ENCODE measurements at regions of chr11 and their contacts with region 1.

Region 1: GRCh38 chr11:47176328-47177228 is at the start of gene ARFGAP2:
- DNase-seq: peak; percentile 92 to 98 (median 96)
- ATAC-seq: peak; percentile 94
- H3K4me3 ChIP-seq: peak within 1 kb of the TSS; percentile 97
- H3K4me3 Mint-ChIP-seq: peak within 1 kb of the TSS; percentile 92 to 99 (median 98)
- H3K27ac ChIP-seq: peak within 1 kb of the TSS; percentile 97
- H3K27ac Mint-ChIP-seq: peak within 1 kb of the TSS; percentile 97 to 100 (median 99)
- H3K4me1 ChIP-seq: peaks cover 19 to 31% of the 10 kb centered on the region in 2 donors
- H3K4me1 Mint-ChIP-seq: peaks cover 19 to 60% (median 45%) of the 10 kb centered on the region in 7 donors
- H3K27me3 ChIP-seq: no peaks in the 10 kb centered on the region
- H3K27me3 Mint-ChIP-seq: no peaks in the 10 kb centered on the region
- total RNA-seq, gene ARFGAP2: 107 to 220 (median 155) TPM

Region 2: GRCh38 chr11:46593550-46594373 is 582.8 kb before region 1 on chr11 and contains the start of gene AMBRA1:
- CTCF ChIA-PET with region 1: no interaction called
- POLR2A ChIA-PET with region 1: no interaction called
- intact Hi-C with region 1: loop called in 1 of 2 experiments (anchors 1 kb)
- DNase-seq: peak; percentile 59 to 83 (median 80)
- ATAC-seq: peak; percentile 97
- H3K4me3 ChIP-seq: peak within 1 kb of the TSS; percentile 69
- H3K4me3 Mint-ChIP-seq: peak within 1 kb of the TSS; percentile 90 to 100 (median 97)
- H3K27ac ChIP-seq: peak within 1 kb of the TSS; percentile 84
- H3K27ac Mint-ChIP-seq: peak within 1 kb of the TSS; percentile 92 to 98 (median 96)
- H3K4me1 ChIP-seq: peaks cover 19 to 22% of the 10 kb centered on the region in 2 donors
- H3K4me1 Mint-ChIP-seq: peaks cover 23 to 49% (median 41%) of the 10 kb centered on the region in 7 donors
- H3K27me3 ChIP-seq: no peaks in the 10 kb centered on the region
- H3K27me3 Mint-ChIP-seq: no peaks in the 10 kb centered on the region
- total RNA-seq, gene AMBRA1: 38.1 to 48.7 (median 44.6) TPM

Region 3: GRCh38 chr11:46936138-46937110 is 240.2 kb before region 1 on chr11 and contains the start of gene CSTPP1:
- CTCF ChIA-PET with region 1: no interaction called
- POLR2A ChIA-PET with region 1: no interaction called
- intact Hi-C with region 1: loop called in 1 of 2 experiments (anchors 1 kb)
- DNase-seq: peak; percentile 80 to 92 (median 89)
- ATAC-seq: peak; percentile 99
- H3K4me3 ChIP-seq: peak within 1 kb of the TSS; percentile 76
- H3K4me3 Mint-ChIP-seq: peak within 1 kb of the TSS; percentile 86 to 100 (median 92)
- H3K27ac ChIP-seq: peak within 1 kb of the TSS; percentile 72
- H3K27ac Mint-ChIP-seq: peak within 1 kb of the TSS; percentile 89 to 98 (median 92)
- H3K4me1 ChIP-seq: peaks cover 0 to 11% of the 10 kb centered on the region in 2 donors
- H3K4me1 Mint-ChIP-seq: peaks cover 5 to 24% (median 21%) of the 10 kb centered on the region in 7 donors
- H3K27me3 ChIP-seq: no peaks in the 10 kb centered on the region
- H3K27me3 Mint-ChIP-seq: peaks cover 8 to 19% (median 9%) of the 10 kb centered on the region in 5 donors
- total RNA-seq, gene CSTPP1: 9.3 to 18.6 (median 16.1) TPM

Region 4: DNA sequence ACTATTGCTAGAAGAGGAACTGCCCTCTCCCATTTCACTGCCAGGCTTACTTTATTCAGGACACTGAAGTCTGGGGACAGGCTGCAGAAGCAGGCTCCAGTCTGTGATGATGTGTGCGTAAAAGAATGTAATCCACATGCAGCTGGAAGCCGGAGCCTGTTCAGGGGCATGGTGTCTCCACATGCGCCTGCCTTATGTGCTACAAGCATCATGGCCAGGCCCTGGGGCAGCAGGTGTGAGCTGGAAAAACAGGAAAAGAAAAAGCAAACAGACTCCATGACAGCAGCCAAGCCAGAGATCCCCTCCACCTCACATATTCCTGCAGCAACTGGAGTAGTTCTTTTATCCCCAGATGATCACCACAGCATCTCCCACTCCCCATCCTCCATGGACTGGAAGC is 33.3 kb before region 1 on chr11:
- CTCF ChIA-PET with region 1: no interaction called
- POLR2A ChIA-PET with region 1: no interaction called
- intact Hi-C with region 1: no loop called
- DNase-seq: no peak
- ATAC-seq: no peak
- H3K4me3 ChIP-seq: no peak overlapping the region
- H3K4me3 Mint-ChIP-seq: no peak overlapping the region
- H3K27ac ChIP-seq: no peak overlapping the region
- H3K27ac Mint-ChIP-seq: peak overlapping the region in 1 of 9 donors; percentile 3
- H3K4me1 ChIP-seq: no peaks in the 10 kb centered on the region
- H3K4me1 Mint-ChIP-seq: peaks cover 0 to 4% (median 0%) of the 10 kb centered on the region in 7 donors
- H3K27me3 ChIP-seq: no peaks in the 10 kb centered on the region
- H3K27me3 Mint-ChIP-seq: no peaks in the 10 kb centered on the region

Region 5: GRCh38 chr11:47269002-47269828 is 92.6 kb after region 1 on chr11:
- CTCF ChIA-PET with region 1: interaction called, 4 read pairs
- POLR2A ChIA-PET with region 1: interaction called, 11 read pairs
- intact Hi-C with region 1: loop called (anchors 1 kb)
- DNase-seq: peak; percentile 82 to 89 (median 87)
- ATAC-seq: peak; percentile 82
- H3K4me3 ChIP-seq: peak overlapping the region; percentile 65
- H3K4me3 Mint-ChIP-seq: peak overlapping the region; percentile 78 to 97 (median 87)
- H3K27ac ChIP-seq: peak overlapping the region; percentile 95
- H3K27ac Mint-ChIP-seq: peak overlapping the region; percentile 93 to 99 (median 96)
- H3K4me1 ChIP-seq: peaks cover 27 to 43% of the 10 kb centered on the region in 2 donors
- H3K4me1 Mint-ChIP-seq: peaks cover 38 to 62% (median 59%) of the 10 kb centered on the region in 7 donors
- H3K27me3 ChIP-seq: no peaks in the 10 kb centered on the region
- H3K27me3 Mint-ChIP-seq: no peaks in the 10 kb centered on the region

Region 6: DNA sequence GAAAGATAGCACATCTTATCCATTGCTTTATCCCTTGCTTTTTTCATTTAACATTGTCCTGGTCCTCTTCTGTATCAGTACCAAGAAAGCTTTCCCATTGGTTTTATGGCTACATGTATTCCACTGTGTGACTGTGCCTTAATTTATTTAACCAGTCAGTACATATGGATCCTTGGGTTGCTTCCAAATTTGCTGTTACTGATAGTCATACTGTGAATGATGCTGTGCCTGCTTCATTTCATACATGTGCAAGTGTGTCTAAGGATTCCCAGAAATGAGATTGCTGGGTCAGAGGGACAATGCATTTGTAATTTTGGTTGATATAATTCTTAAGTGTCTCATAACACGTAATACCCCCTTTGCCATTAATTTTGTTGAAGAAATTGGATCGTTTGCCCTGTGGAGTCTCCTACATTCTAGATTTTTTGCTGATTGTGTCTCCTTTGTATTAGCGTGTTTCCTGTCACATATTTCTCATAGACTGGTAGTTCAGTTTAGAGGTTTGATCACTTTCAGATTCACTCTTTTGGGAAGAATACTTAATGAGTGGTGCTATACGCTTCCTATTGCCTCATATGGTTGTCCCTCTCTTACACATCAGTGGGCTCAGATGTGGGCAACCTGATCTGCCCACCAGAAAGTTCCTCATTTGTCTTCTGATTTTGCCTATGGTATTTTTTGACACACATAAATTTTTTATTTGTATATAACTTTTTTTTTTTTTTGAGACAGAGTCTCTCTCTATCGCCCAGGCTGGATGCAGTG is 140.7 kb after region 1 on chr11:
- CTCF ChIA-PET with region 1: no interaction called
- POLR2A ChIA-PET with region 1: no interaction called
- intact Hi-C with region 1: no loop called
- DNase-seq: no peak
- ATAC-seq: no peak
- H3K4me3 ChIP-seq: no peak overlapping the region
- H3K4me3 Mint-ChIP-seq: no peak overlapping the region
- H3K27ac ChIP-seq: no peak overlapping the region
- H3K27ac Mint-ChIP-seq: peak overlapping the region in 2 of 9 donors; percentile 33 to 60
- H3K4me1 ChIP-seq: no peaks in the 10 kb centered on the region
- H3K4me1 Mint-ChIP-seq: peaks cover 0 to 7% (median 0%) of the 10 kb centered on the region in 7 donors
- H3K27me3 ChIP-seq: no peaks in the 10 kb centered on the region
- H3K27me3 Mint-ChIP-seq: no peaks in the 10 kb centered on the region

Region 7: DNA sequence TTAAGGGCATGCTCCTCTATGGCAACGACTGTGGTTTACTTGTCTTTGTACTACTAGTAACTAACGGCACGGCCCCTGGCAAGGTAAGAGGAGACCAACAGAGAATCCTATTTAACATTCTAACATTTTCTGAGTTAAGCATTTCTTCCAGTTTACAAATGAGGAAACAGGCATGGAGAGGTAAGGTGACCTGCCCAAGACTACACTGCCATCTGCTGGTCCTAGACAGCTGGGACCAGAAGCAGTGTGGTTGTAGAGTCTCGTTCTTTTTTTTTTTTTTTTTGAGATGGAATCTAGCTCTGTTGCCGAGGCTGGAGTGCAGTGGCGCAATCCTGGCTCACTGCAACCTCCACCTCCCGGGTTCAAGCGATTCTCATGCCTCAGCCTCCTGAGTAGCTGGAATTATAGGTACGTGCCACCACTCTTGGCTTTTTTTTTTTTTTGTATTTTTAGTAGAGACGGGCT is 277.6 kb after region 1 on chr11:
- CTCF ChIA-PET with region 1: interaction called, 3 read pairs
- POLR2A ChIA-PET with region 1: no interaction called
- intact Hi-C with region 1: loop called (anchors 1 to 2 kb)
- DNase-seq: peak in 8 of 9 donors; percentile 51 to 76 (median 68)
- ATAC-seq: peak; percentile 99
- H3K4me3 ChIP-seq: no peak overlapping the region
- H3K4me3 Mint-ChIP-seq: peak overlapping the region in 1 of 10 donors; percentile 41
- H3K27ac ChIP-seq: no peak overlapping the region
- H3K27ac Mint-ChIP-seq: peak overlapping the region in 6 of 9 donors; percentile 16 to 49 (median 44)
- H3K4me1 ChIP-seq: no peaks in the 10 kb centered on the region
- H3K4me1 Mint-ChIP-seq: peaks cover 0 to 7% (median 4%) of the 10 kb centered on the region in 7 donors
- H3K27me3 ChIP-seq: no peaks in the 10 kb centered on the region
- H3K27me3 Mint-ChIP-seq: no peaks in the 10 kb centered on the region

Region 8: GRCh38 chr11:47766305-47767227 is 590.0 kb after region 1 on chr11:
- CTCF ChIA-PET with region 1: no interaction called
- POLR2A ChIA-PET with region 1: no interaction called
- intact Hi-C with region 1: loop called in 1 of 2 experiments (anchors 2 kb)
- DNase-seq: peak; percentile 60 to 84 (median 79)
- ATAC-seq: peak; percentile 52
- H3K4me3 ChIP-seq: peak overlapping the region; percentile 94
- H3K4me3 Mint-ChIP-seq: peak overlapping the region; percentile 88 to 100 (median 96)
- H3K27ac ChIP-seq: peak overlapping the region; percentile 97
- H3K27ac Mint-ChIP-seq: peak overlapping the region; percentile 96 to 100 (median 99)
- H3K4me1 ChIP-seq: peaks cover 20 to 22% of the 10 kb centered on the region in 2 donors
- H3K4me1 Mint-ChIP-seq: peaks cover 16 to 39% (median 23%) of the 10 kb centered on the region in 7 donors
- H3K27me3 ChIP-seq: no peaks in the 10 kb centered on the region
- H3K27me3 Mint-ChIP-seq: no peaks in the 10 kb centered on the region

Measured in naive thymus-derived CD4-positive, alpha-beta T cell (primary cell).